ENCODE measurements at regions of chr9 and their contacts with region 1.

Region 1: GRCh38 chr9:72022841-72023240 is 37.6 kb downstream of the C9orf57 start:
- DNase-seq: no peak
- ATAC-seq: no peak
- H3K4me3 ChIP-seq: no peak overlapping the region
- H3K27ac ChIP-seq: no peak overlapping the region
- H3K4me1 ChIP-seq: no peaks in the 10 kb centered on the region
- H3K27me3 ChIP-seq: no peaks in the 10 kb centered on the region

Region 2: GRCh38 chr9:71806901-71807307 is 215.9 kb before region 1 on chr9:
- intact Hi-C with region 1: loop called (anchors 2 to 10 kb)
- DNase-seq: peak; percentile 55 to 78 (median 60)
- ATAC-seq: peak; percentile 94
- H3K4me3 ChIP-seq: no peak overlapping the region
- H3K27ac ChIP-seq: no peak overlapping the region
- H3K4me1 ChIP-seq: no peaks in the 10 kb centered on the region
- H3K27me3 ChIP-seq: no peaks in the 10 kb centered on the region

Region 3: GRCh38 chr9:71812385-71812784 is 210.5 kb before region 1 on chr9:
- intact Hi-C with region 1: loop called (anchors 2 to 10 kb)
- DNase-seq: peak; percentile 57 to 62 (median 62)
- ATAC-seq: peak; percentile 86 to 92
- H3K4me3 ChIP-seq: no peak overlapping the region
- H3K27ac ChIP-seq: no peak overlapping the region
- H3K4me1 ChIP-seq: peaks cover 2% of the 10 kb centered on the region
- H3K27me3 ChIP-seq: no peaks in the 10 kb centered on the region

Measured in right cardiac atrium (tissue), 5 donors.